ENCODE measurements at regions of chr1 and their contacts with region 1.

Region 1: DNA sequence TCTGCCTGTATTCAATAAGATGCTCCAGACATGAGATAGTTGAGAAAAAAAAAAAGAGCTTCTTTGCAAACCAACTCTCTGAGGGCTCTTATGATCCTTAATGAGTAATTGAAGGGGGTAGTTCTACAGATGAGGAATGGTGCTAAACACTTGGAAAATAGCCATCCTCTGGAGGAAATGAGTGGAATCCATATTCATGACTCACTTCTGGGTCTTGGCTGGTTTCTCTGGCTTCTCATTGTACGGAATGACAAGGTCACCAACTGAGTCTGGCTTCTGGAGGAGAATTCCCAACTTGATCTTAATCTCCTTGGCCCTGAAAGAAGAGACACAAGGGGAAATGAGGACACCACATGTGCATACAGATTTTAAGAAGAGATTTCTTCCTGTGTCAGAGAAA is 34.7 kb downstream of the RGS5 start:
- DNase-seq: peak; percentile 98
- H3K4me3 ChIP-seq: no peak overlapping the region
- H3K27ac ChIP-seq: peak overlapping the region; percentile 83
- H3K4me1 ChIP-seq: peaks cover 84% of the 10 kb centered on the region
- H3K27me3 ChIP-seq: no peaks in the 10 kb centered on the region
- CTCF ChIP-seq: no peak
- POLR2A ChIP-seq: no peak

Region 2: GRCh38 chr1:162854245-162854882 is 313.7 kb before region 1 on chr1:
- CTCF ChIA-PET with region 1: interaction called, 5 read pairs
- POLR2A ChIA-PET with region 1: interaction called, 3 read pairs
- dilution Hi-C with region 1: no loop called
- intact Hi-C with region 1: loop called (anchors 1 kb)
- DNase-seq: peak; percentile 82
- H3K4me3 ChIP-seq: peak overlapping the region in 1 of 3 experiments; percentile 4
- H3K27ac ChIP-seq: peak overlapping the region; percentile 93
- H3K4me1 ChIP-seq: peaks cover 57% of the 10 kb centered on the region
- H3K27me3 ChIP-seq: no peaks in the 10 kb centered on the region
- CTCF ChIP-seq: peak; percentile 63 to 68
- POLR2A ChIP-seq: peak; percentile 7

Region 3: DNA sequence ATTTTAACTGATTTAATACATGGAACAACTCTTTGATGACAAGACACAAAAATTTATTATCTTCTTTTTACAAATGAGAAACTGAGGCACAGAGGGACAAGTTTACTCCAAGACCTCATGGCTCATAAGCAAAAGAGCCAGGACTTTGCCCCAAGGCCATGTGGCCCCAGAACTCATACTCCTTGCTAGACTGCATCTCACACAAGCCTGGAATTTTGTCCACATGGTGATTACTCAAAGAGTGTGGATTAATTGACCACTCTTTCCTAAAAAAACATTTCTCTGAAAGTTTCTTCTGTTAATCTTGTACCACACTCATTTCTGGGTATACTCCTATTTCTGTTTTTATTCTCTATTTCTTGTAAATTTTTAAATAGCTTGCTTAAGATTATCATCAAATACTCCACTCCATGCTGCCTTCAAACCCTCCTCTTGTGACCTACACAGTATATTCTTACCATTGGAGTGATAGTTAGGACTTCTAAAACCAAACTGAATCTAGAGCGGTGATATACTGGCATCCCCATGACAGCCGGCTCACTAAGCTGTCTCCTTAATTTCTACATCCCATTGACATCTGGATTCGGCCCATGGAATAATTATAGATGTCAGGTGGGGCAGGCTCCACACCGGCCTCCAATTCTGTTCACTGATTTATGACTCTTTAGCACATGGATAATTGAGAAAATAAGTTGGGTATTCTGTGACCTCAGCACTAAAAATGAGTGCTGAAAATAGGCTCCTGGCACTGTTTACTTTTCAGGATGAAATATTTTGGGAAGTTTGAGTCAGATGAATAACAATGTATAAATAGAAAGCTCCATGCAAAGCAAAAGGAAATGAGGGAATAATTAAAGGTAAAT is 82.8 kb before region 1 on chr1:
- CTCF ChIA-PET with region 1: interaction called, 5 read pairs
- POLR2A ChIA-PET with region 1: no interaction called
- dilution Hi-C with region 1: no loop called
- intact Hi-C with region 1: loop called (anchors 1 kb)
- DNase-seq: peak; percentile 83
- H3K4me3 ChIP-seq: no peak overlapping the region
- H3K27ac ChIP-seq: peak overlapping the region; percentile 60
- H3K4me1 ChIP-seq: peaks cover 37% of the 10 kb centered on the region
- H3K27me3 ChIP-seq: no peaks in the 10 kb centered on the region
- CTCF ChIP-seq: no peak
- POLR2A ChIP-seq: no peak

Region 4: GRCh38 chr1:163147019-163147418 is 21.0 kb before region 1 on chr1:
- CTCF ChIA-PET with region 1: interaction called, 12 read pairs
- POLR2A ChIA-PET with region 1: interaction called, 4 read pairs
- dilution Hi-C with region 1: no loop called
- intact Hi-C with region 1: loop called (anchors 1 kb)
- DNase-seq: peak; percentile 90
- H3K4me3 ChIP-seq: no peak overlapping the region
- H3K27ac ChIP-seq: peak overlapping the region; percentile 72
- H3K4me1 ChIP-seq: peaks cover 13% of the 10 kb centered on the region
- H3K27me3 ChIP-seq: no peaks in the 10 kb centered on the region
- CTCF ChIP-seq: no peak
- POLR2A ChIP-seq: no peak

Region 5: GRCh38 chr1:163195728-163196448 is 27.8 kb after region 1 on chr1:
- CTCF ChIA-PET with region 1: interaction called, 3 read pairs
- POLR2A ChIA-PET with region 1: no interaction called
- dilution Hi-C with region 1: no loop called
- intact Hi-C with region 1: loop called (anchors 1 kb)
- DNase-seq: peak; percentile 97
- H3K4me3 ChIP-seq: no peak overlapping the region
- H3K27ac ChIP-seq: peak overlapping the region; percentile 79
- H3K4me1 ChIP-seq: peaks cover 53% of the 10 kb centered on the region
- H3K27me3 ChIP-seq: no peaks in the 10 kb centered on the region
- CTCF ChIP-seq: no peak
- POLR2A ChIP-seq: peak; percentile 48